Cardiac septum (tissue), 1 donor: ENCODE measurements at regions of chr5 and their contacts with region 1.

Region 1: DNA sequence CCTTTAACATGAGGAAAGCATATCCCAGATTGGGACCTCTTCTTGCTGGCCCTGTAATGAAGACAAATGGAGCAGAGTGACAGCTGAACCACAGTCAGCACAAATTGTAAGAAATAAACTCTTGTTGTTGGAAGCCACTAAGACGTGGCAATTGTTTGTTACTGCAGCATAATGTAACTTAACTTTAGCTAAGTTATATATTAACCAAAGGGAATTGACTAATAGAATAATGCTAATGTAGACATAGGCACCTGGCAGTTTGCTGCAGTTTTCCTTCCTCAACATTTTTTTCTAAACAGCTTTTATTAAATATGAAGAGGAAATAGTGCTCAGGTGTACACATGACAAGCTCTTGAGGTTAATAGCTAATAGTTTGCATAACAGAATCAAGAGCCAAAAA is 300.7 kb upstream of the SLC30A5 start:
- DNase-seq: no peak

Region 2: GRCh38 chr5:68612972-68613371 is 180.1 kb before region 1 on chr5:
- intact Hi-C with region 1: no loop called
- DNase-seq: no peak

Region 3: GRCh38 chr5:68730359-68731300 is 62.4 kb before region 1 on chr5:
- intact Hi-C with region 1: loop called (anchors 5 kb)
- DNase-seq: no peak

Region 4: DNA sequence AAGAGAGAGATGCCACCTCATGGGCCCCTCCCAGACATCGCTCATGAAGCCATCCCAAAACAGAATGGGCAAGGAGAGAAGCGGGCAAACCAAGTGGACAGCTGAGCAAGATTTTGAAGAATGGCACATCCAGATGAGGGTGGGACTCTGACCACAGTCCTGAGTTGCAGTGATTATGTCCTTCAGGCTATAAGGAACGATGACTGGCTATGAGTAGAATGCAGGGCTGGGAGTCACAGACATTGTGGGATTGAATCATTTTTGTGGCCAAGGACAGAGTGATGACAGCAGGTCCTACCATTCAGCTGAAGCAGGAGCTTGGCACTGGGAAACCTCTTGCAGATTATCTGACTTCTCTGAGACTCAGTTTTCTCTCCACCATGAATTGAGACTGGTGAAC is 55.0 kb after region 1 on chr5:
- intact Hi-C with region 1: no loop called
- DNase-seq: no peak

Region 5: DNA sequence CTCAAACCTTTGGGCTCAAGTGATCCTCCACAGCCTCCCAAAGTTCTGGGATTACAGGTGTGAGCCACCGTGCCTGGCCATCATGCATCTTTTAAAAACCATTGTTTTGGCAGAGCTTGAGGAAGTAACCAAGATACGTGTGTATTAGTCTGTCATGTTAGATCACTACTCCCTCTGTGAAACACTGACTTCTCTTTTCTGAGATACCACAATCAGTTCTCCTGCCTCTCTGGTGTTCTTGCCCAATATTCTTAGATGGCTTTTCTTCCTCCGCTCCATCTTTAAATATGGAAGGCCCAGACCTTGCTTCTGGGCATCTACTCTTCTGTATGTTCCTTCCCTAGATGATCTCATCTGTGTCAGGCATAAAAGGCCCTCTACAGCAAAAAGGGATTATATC is 359.7 kb after region 1 on chr5:
- intact Hi-C with region 1: no loop called
- DNase-seq: no peak